ENCODE measurements at regions of chr17 and their contacts with region 1.

Region 1: GRCh38 chr17:69246726-69247375 is 18.2 kb upstream of the ABCA10 start:
- DNase-seq: no peak
- H3K4me3 ChIP-seq: no peak overlapping the region
- H3K27ac ChIP-seq: no peak overlapping the region
- H3K4me1 ChIP-seq: no peaks in the 10 kb centered on the region
- H3K27me3 ChIP-seq: no peaks in the 10 kb centered on the region
- CTCF ChIP-seq: peak in 2 of 3 experiments; percentile 34 to 51; a peak in 2 of 4 replicates
- EP300 ChIP-seq: no peak
- POLR2A ChIP-seq: no peak
- RAD21 ChIP-seq: peak; percentile 60 to 66

Region 2: DNA sequence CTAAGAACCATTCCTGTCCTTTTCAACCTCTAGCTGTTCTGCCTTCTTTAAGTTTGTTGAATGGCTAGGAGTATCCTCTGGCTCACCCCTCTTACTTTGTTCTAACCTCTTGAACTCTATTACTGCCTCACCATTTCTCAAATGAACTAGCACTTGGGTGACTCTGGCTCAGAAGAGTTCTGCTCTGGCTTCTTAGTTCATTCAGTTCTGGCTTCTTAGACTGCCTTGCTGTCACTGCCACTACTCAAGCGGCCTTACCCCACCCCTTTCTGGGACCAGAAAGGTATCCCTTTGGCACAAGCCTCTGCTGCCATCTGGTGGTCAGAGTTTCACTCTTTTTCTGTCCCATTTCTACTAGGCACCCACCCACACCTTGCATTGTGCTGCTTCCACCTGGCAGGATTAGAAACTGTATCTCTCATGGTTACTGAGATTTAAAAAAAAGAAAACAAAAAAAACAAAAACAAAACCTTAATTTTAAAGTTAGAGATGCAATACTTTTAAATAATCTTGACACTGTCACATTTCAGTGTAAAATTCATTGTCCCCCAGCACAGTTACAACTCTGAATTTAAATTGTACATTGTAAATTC is 11.4 kb before region 1 on chr17:
- CTCF ChIA-PET with region 1: interaction called, 20 read pairs
- POLR2A ChIA-PET with region 1: no interaction called
- DNase-seq: peak; percentile 57 to 91
- H3K4me3 ChIP-seq: no peak overlapping the region
- H3K27ac ChIP-seq: no peak overlapping the region
- H3K4me1 ChIP-seq: no peaks in the 10 kb centered on the region
- H3K27me3 ChIP-seq: no peaks in the 10 kb centered on the region
- CTCF ChIP-seq: peak; percentile 53 to 94 (median 83)
- EP300 ChIP-seq: no peak
- POLR2A ChIP-seq: no peak
- RAD21 ChIP-seq: peak; percentile 96 to 97